ENCODE measurements at regions of chr22 and their contacts with region 1.

Region 1: DNA sequence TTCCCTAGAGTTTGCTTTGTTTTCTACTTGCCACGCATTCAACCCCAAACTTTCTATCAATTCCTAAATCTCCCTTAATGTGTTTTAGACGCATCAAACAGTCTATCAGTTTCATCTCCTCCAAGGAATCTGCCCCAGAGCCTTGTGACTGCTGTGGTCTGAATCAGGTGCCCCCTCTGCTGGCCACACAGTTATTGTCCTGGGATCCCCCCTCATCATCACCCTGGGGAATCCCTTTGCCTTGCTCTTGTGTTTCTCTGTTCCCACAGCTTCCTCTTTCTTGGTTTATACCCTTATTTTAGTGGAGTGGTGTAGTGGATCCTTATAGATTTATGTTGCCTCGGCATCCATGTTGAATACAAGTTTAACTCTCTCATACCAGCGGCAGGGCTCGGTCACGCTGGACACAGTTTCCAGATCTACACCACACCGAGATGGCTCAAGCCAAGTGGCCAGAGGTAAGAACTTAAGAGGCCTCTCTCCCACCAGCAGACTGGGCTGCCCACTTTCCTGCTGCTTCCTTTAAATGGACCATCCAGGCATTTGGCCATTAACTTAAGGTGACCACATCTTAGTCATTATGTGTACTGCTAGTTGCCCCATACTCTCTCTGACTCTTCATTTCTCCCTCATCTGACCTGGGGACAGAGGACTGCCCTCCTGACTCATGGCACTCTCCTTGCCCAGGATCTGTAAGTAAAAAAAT is 8.2 kb downstream of the UPB1 start:
- DNase-seq: peak; percentile 33
- H3K4me3 ChIP-seq: no peak overlapping the region
- H3K27ac ChIP-seq: no peak overlapping the region
- H3K4me1 ChIP-seq: no peaks in the 10 kb centered on the region
- H3K27me3 ChIP-seq: no peaks in the 10 kb centered on the region
- CTCF ChIP-seq: peak in 3 of 4 experiments; percentile 52 to 63 (median 61)
- POLR2A ChIP-seq: no peak

Region 2: DNA sequence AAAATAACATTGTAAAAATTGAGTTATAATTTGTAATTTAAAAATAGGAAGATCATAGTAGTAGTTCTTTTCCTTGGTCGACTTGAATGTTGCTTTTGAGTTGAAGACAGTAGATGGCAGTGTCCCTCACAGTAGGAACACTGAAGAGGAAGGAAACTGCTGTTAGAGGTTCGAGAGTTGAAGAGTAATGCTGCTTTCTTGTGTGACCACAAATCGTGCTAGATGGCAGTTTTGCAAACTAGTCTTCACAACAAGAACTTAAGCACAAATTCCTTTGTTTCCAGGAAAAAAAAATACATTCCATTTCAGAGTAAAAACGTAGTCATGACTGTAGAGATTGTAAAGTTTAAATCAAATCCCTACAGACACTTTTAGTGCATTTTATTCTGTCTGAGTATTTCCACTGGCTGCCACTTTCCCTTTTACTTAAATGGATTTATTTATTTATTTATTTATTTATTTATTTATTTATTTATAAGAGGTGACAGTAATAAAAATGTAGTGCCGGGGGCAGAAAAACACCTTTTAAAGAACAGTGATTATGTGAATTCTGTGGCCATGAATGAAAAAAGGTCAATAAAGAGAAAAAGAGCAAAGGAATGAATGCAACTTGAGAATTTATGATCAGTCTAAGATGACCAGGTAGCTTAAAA is 178.1 kb before region 1 on chr22:
- intact Hi-C with region 1: loop called (anchors 5 kb)
- DNase-seq: peak; percentile 19
- H3K4me3 ChIP-seq: no peak overlapping the region
- H3K27ac ChIP-seq: no peak overlapping the region
- H3K4me1 ChIP-seq: no peaks in the 10 kb centered on the region
- H3K27me3 ChIP-seq: no peaks in the 10 kb centered on the region
- CTCF ChIP-seq: peak; percentile 16 to 73 (median 54)
- POLR2A ChIP-seq: no peak

Region 3: DNA sequence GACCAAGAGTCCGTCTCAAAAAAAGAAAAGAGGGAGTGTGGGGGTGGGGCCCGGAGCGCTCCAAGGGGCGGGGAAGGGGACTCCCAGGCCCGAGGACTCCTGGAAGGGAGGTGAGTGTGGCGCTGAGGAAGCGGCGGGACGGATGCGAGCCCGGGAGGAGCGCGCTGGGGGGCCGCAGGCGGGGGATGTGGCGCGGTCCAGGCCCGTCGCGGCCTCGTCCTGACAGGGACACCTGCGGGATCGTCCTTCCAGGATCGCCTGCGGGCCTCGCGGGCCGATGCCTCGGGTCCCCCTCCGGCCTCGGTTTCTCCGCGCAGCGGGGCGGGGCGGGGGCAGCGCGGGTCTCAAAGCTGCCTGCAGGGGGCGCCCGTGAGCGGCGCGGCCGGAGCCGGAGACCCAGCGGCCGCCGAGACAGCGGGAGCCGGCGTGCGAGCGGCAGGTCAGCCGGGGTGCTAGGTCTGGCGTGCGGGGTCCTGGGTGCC is 79.7 kb before region 1 on chr22:
- intact Hi-C with region 1: loop called (anchors 5 kb)
- DNase-seq: no peak
- H3K4me3 ChIP-seq: peak overlapping the region; percentile 39 to 49
- H3K27ac ChIP-seq: peak overlapping the region in 1 of 2 donors; percentile 19
- H3K4me1 ChIP-seq: no peaks in the 10 kb centered on the region
- H3K27me3 ChIP-seq: no peaks in the 10 kb centered on the region
- CTCF ChIP-seq: peak; percentile 81 to 89 (median 84)
- POLR2A ChIP-seq: no peak

Measured in prostate gland (tissue), 2 donors.